ENCODE measurements at regions of chr19 and their contacts with region 1.

Region 1: GRCh38 chr19:54558339-54558738 is 15.3 kb upstream of the LILRA2 start:
- DNase-seq: peak; percentile 14

Region 2: DNA sequence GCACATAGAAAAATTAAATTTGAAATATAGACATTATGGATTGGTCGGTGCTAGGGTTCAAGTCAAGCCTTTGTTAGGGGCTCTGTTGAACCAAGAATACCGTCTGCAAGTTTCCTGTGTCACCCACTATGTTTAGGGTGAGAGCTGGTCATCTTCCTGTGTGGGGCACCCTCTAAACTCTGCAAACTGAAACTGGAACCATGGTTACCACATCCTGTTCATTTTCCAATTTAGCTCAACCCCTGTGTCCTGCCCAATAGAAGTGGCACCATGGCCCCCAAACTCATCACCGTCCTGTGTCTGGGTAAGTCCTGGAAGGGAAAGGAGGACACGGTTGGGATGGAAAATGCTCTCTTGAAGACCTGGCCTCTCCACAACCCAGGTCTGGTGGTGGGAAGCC is 25.8 kb before region 1 on chr19:
- intact Hi-C with region 1: no loop called
- DNase-seq: no peak

Region 3: GRCh38 chr19:55279770-55280643 is 721.7 kb after region 1 on chr19 and contains the start of gene HSPBP1:
- intact Hi-C with region 1: loop called in 1 of 2 experiments (anchors 5 kb)
- DNase-seq: peak; percentile 97
- total RNA-seq, gene HSPBP1: 19.8 to 20.1 TPM

Measured in posterior vena cava (tissue), 2 donors.